T-cell (primary cell): ENCODE measurements at regions of chr2 and their contacts with region 1.

Region 1: GRCh38 chr2:73176881-73177644 is 25.3 kb upstream of the NOTO start:
- DNase-seq: peak; percentile 72 to 94 (median 85)
- ATAC-seq: peak; percentile 84 to 96 (median 89)
- H3K4me3 ChIP-seq: peak overlapping the region; percentile 60 to 61
- H3K4me3 Mint-ChIP-seq: peak overlapping the region; percentile 83 to 90 (median 86)
- H3K27ac ChIP-seq: no peak overlapping the region
- H3K27ac Mint-ChIP-seq: no peak overlapping the region
- H3K4me1 ChIP-seq: peaks cover 10 to 28% of the 10 kb centered on the region in 2 experiments
- H3K4me1 Mint-ChIP-seq: peaks cover 15 to 17% (median 15%) of the 10 kb centered on the region in 3 donors
- H3K27me3 ChIP-seq: peaks cover 8 to 56% of the 10 kb centered on the region in 2 experiments
- H3K27me3 Mint-ChIP-seq: peaks cover 28 to 44% of the 10 kb centered on the region in 2 donors

Region 2: GRCh38 chr2:72892506-72893173 is 284.4 kb before region 1 on chr2:
- CTCF ChIA-PET with region 1: interaction called, 9 to 19 read pairs
- POLR2A ChIA-PET with region 1: no interaction called
- DNase-seq: peak in 28 of 35 experiments; percentile 23 to 71 (median 44)
- ATAC-seq: peak; percentile 56 to 88 (median 78)
- H3K4me3 ChIP-seq: no peak overlapping the region
- H3K4me3 Mint-ChIP-seq: no peak overlapping the region
- H3K27ac ChIP-seq: no peak overlapping the region
- H3K27ac Mint-ChIP-seq: no peak overlapping the region
- H3K4me1 ChIP-seq: peaks cover 0 to 11% of the 10 kb centered on the region in 2 experiments
- H3K4me1 Mint-ChIP-seq: peaks cover 5 to 12% (median 10%) of the 10 kb centered on the region in 3 donors
- H3K27me3 ChIP-seq: peaks cover 10 to 84% of the 10 kb centered on the region in 2 experiments
- H3K27me3 Mint-ChIP-seq: peaks cover 47 to 73% of the 10 kb centered on the region in 2 donors

Region 3: GRCh38 chr2:72993147-72993932 is 183.7 kb before region 1 on chr2:
- CTCF ChIA-PET with region 1: interaction called, 14 to 19 read pairs
- POLR2A ChIA-PET with region 1: no interaction called
- DNase-seq: peak in 24 of 35 experiments; percentile 6 to 77 (median 27)
- ATAC-seq: peak; percentile 40 to 52 (median 48)
- H3K4me3 ChIP-seq: no peak overlapping the region
- H3K4me3 Mint-ChIP-seq: no peak overlapping the region
- H3K27ac ChIP-seq: no peak overlapping the region
- H3K27ac Mint-ChIP-seq: no peak overlapping the region
- H3K4me1 ChIP-seq: no peaks in the 10 kb centered on the region
- H3K4me1 Mint-ChIP-seq: no peaks in the 10 kb centered on the region
- H3K27me3 ChIP-seq: peaks cover 0 to 5% of the 10 kb centered on the region in 2 experiments
- H3K27me3 Mint-ChIP-seq: no peaks in the 10 kb centered on the region

Region 4: DNA sequence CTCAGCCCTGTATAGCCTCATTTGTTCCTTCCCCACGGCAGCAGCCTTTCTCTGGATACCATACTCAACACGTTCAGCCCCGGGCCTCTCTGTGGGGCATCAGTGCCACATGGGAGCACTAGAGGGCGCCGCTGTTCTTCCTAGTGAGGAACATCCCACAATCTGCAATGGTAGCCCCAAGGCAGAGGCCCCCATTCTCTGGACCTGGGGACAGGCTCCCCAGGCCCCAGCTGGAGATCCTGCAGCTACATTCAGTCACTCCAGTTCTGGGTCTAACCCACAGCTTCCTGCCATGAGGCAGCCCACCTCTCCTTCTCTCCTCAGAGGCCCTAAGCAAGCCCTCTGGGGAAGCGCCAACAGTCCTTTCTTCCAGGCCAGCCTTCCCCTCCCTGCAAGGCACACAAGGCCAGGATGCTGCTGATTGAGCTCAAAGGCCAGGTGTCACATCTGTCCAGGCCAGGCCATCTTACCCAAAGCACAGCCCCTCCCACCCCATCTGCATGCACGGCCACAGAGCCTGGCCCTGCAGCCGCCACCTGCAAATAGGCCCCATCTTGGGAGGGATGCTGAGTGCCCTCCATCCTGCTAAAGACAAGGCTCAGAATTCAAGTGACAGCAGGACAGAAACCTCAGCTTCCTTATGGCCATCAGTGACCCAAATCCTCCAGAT is 91.2 kb before region 1 on chr2:
- CTCF ChIA-PET with region 1: interaction called, 25 to 44 read pairs
- POLR2A ChIA-PET with region 1: no interaction called
- DNase-seq: peak; percentile 55 to 86 (median 76)
- ATAC-seq: peak; percentile 83 to 97 (median 87)
- H3K4me3 ChIP-seq: no peak overlapping the region
- H3K4me3 Mint-ChIP-seq: no peak overlapping the region
- H3K27ac ChIP-seq: no peak overlapping the region
- H3K27ac Mint-ChIP-seq: no peak overlapping the region
- H3K4me1 ChIP-seq: peaks cover 0 to 7% of the 10 kb centered on the region in 2 experiments
- H3K4me1 Mint-ChIP-seq: peaks cover 0 to 14% (median 2%) of the 10 kb centered on the region in 3 donors
- H3K27me3 ChIP-seq: peaks cover 0 to 3% of the 10 kb centered on the region in 2 experiments
- H3K27me3 Mint-ChIP-seq: no peaks in the 10 kb centered on the region

Region 5: DNA sequence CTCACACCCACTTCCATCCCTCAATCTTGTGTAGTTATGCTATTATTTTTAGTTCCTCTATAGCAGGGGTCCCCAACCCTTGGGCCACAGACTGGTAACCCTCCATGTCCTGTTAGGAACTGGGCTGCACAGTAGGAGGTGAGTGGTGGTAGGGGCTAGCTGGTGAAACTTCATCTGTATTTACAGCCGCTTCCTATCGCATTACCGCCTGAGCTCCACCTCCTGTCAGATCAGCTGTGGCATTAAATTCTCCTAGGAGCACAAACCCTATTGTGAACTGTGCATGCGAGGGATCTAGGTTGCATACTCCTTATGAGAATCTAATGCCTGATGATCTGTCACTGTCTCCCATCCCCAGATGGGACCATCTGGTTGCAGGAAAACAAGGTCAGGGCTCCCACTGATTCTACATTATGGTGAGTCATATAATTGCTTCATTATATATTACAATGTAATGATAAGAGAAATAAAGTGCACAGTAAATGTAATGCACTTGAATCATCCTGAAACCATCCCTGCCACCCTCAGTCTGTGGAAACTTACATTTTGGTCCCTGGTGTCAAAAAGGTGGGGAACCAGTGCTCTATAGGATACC is 62.7 kb before region 1 on chr2:
- CTCF ChIA-PET with region 1: interaction called, 10 to 13 read pairs
- POLR2A ChIA-PET with region 1: no interaction called
- DNase-seq: no peak
- ATAC-seq: no peak
- H3K4me3 ChIP-seq: no peak overlapping the region
- H3K4me3 Mint-ChIP-seq: peak overlapping the region; percentile 56 to 62 (median 62)
- H3K27ac ChIP-seq: no peak overlapping the region
- H3K27ac Mint-ChIP-seq: peak overlapping the region; percentile 31 to 50
- H3K4me1 ChIP-seq: peaks cover 0 to 23% of the 10 kb centered on the region in 2 experiments
- H3K4me1 Mint-ChIP-seq: peaks cover 19 to 28% (median 19%) of the 10 kb centered on the region in 3 donors
- H3K27me3 ChIP-seq: peaks cover 10 to 15% of the 10 kb centered on the region in 2 experiments
- H3K27me3 Mint-ChIP-seq: peaks cover 0 to 3% of the 10 kb centered on the region in 2 donors

Region 6: GRCh38 chr2:73212448-73213176 is 35.5 kb after region 1 on chr2:
- CTCF ChIA-PET with region 1: interaction called, 8 to 35 read pairs
- POLR2A ChIA-PET with region 1: no interaction called
- DNase-seq: peak; percentile 30 to 86 (median 63)
- ATAC-seq: peak; percentile 62 to 73 (median 66)
- H3K4me3 ChIP-seq: no peak overlapping the region
- H3K4me3 Mint-ChIP-seq: peak overlapping the region; percentile 49 to 79 (median 53)
- H3K27ac ChIP-seq: no peak overlapping the region
- H3K27ac Mint-ChIP-seq: peak overlapping the region in 1 of 2 donors; percentile 69
- H3K4me1 ChIP-seq: peaks cover 5 to 25% of the 10 kb centered on the region in 2 experiments
- H3K4me1 Mint-ChIP-seq: peaks cover 36 to 41% (median 38%) of the 10 kb centered on the region in 3 donors
- H3K27me3 ChIP-seq: peaks cover 0 to 6% of the 10 kb centered on the region in 2 experiments
- H3K27me3 Mint-ChIP-seq: peaks cover 7 to 13% of the 10 kb centered on the region in 2 donors